ENCODE measurements at regions of chr17 and their contacts with region 1.

Region 1: GRCh38 chr17:4420692-4421131 is 13.0 kb upstream of the SPNS3 start:
- DNase-seq: peak; percentile 69 to 92
- H3K4me3 ChIP-seq: no peak overlapping the region
- H3K27ac ChIP-seq: no peak overlapping the region
- H3K4me1 ChIP-seq: peaks cover 0 to 8% (median 5%) of the 10 kb centered on the region in 4 donors
- H3K27me3 ChIP-seq: no peaks in the 10 kb centered on the region
- CTCF ChIP-seq: peak in 5 of 7 experiments; percentile 59 to 89 (median 78)
- EP300 ChIP-seq: no peak
- POLR2A ChIP-seq: no peak

Region 2: GRCh38 chr17:4204710-4205173 is 216.0 kb before region 1 on chr17:
- intact Hi-C with region 1: loop called (anchors 5 kb)
- DNase-seq: peak in 1 of 2 donors; percentile 85
- H3K4me3 ChIP-seq: no peak overlapping the region
- H3K27ac ChIP-seq: peak overlapping the region in 4 of 5 donors; percentile 24 to 76 (median 62)
- H3K4me1 ChIP-seq: peaks cover 0 to 14% (median 6%) of the 10 kb centered on the region in 4 donors
- H3K27me3 ChIP-seq: no peaks in the 10 kb centered on the region
- CTCF ChIP-seq: no peak
- EP300 ChIP-seq: peak; percentile 58
- POLR2A ChIP-seq: no peak

Region 3: DNA sequence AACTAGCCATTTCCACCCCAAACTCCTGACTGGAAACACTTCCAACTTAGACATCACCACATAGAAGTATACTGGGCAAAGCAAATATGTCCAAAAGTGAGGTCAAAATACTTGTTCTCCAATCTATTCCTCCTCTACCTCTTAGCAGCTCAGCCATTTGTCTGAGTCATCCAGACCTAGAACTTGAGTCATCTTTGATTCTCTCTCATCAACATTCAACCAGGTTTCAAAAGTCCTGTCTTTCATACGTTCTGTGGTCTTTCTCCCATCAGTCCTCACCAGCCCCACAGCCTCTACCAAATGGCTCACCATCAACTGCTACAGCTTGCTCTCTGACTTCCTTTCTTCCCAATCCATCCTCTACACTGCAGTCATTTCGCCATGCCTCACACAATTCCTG is 163.8 kb before region 1 on chr17:
- intact Hi-C with region 1: no loop called
- DNase-seq: no peak
- H3K4me3 ChIP-seq: no peak overlapping the region
- H3K27ac ChIP-seq: no peak overlapping the region
- H3K4me1 ChIP-seq: peaks cover 5 to 18% (median 11%) of the 10 kb centered on the region in 4 donors
- H3K27me3 ChIP-seq: no peaks in the 10 kb centered on the region
- CTCF ChIP-seq: no peak
- EP300 ChIP-seq: no peak
- POLR2A ChIP-seq: no peak

Region 4: GRCh38 chr17:4540224-4540641 is 119.5 kb after region 1 on chr17:
- intact Hi-C with region 1: loop called (anchors 10 kb)
- DNase-seq: peak in 1 of 2 donors; percentile 56
- H3K4me3 ChIP-seq: no peak overlapping the region
- H3K27ac ChIP-seq: peak overlapping the region; percentile 18 to 73 (median 30)
- H3K4me1 ChIP-seq: peaks cover 33 to 64% (median 52%) of the 10 kb centered on the region in 4 donors
- H3K27me3 ChIP-seq: peaks cover 0 to 9% (median 0%) of the 10 kb centered on the region in 3 donors
- CTCF ChIP-seq: peak in 2 of 7 experiments; percentile 18 to 32
- EP300 ChIP-seq: no peak
- POLR2A ChIP-seq: no peak